Ascending aorta (tissue), 2 donors: ENCODE measurements at regions of chr2 and their contacts with region 1.

Region 1: GRCh38 chr2:109486711-109487535 is 126.8 kb downstream of the SEPTIN10 start:
- DNase-seq: no peak
- H3K4me3 ChIP-seq: no peak overlapping the region
- H3K27ac ChIP-seq: peak overlapping the region; percentile 75 to 89
- H3K4me1 ChIP-seq: peaks cover 16 to 47% of the 10 kb centered on the region in 2 donors
- H3K27me3 ChIP-seq: no peaks in the 10 kb centered on the region
- CTCF ChIP-seq: no peak

Region 2: DNA sequence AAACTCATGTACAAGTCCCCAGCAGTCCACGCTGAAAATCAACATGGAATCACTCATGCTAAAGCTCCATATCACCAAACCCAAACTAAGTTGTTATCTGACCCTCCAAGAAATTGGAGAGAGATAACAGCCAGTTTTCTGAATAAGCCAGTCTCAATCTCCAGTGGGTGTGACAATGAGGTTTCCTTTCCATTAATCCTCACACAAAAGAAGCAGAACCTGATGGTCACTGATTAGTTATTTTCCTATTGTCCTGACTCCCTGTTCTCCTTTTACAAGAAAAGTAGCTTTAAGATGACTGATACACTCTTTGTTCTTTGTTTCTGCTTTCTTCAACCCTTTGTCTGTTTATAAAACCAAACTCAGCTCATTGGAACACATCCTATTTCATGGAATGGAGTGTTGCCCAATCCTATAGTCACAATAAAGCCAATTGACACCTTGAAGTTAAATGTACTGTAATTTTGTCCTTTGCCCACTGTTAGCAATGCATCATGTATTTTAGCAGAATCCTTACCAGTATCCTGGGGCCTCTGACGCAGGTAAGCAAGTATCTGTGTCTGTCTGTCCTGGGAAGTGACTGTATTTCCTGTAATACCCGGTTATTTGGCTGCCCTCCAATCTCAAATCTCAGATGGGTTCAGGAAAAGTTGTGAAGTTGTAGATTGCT is 388.5 kb before region 1 on chr2:
- intact Hi-C with region 1: no loop called
- DNase-seq: no peak
- H3K4me3 ChIP-seq: no peak overlapping the region
- H3K27ac ChIP-seq: no peak overlapping the region
- H3K4me1 ChIP-seq: no peaks in the 10 kb centered on the region
- H3K27me3 ChIP-seq: no peaks in the 10 kb centered on the region
- CTCF ChIP-seq: no peak

Region 3: GRCh38 chr2:109457794-109458193 is 29.1 kb before region 1 on chr2:
- intact Hi-C with region 1: loop called (anchors 2 kb)
- DNase-seq: peak in 1 of 2 donors; percentile 66
- H3K4me3 ChIP-seq: no peak overlapping the region
- H3K27ac ChIP-seq: peak overlapping the region; percentile 28 to 50
- H3K4me1 ChIP-seq: peaks cover 9 to 32% of the 10 kb centered on the region in 2 donors
- H3K27me3 ChIP-seq: no peaks in the 10 kb centered on the region
- CTCF ChIP-seq: peak in 1 of 3 experiments; percentile 12